ENCODE measurements at regions of chr4 and their contacts with region 1.

Region 1: GRCh38 chr4:145154573-145154972 is 25.8 kb downstream of the OTUD4 start:
- DNase-seq: no peak
- ATAC-seq: peak; percentile 51 to 86 (median 82)
- H3K4me3 ChIP-seq: no peak overlapping the region
- H3K27ac ChIP-seq: peak overlapping the region in 7 of 12 donors; percentile 21 to 77 (median 57)
- H3K4me1 ChIP-seq: peaks cover 0 to 22% (median 5%) of the 10 kb centered on the region in 12 donors
- H3K27me3 ChIP-seq: no peaks in the 10 kb centered on the region
- CTCF ChIP-seq: peak; percentile 23 to 65 (median 54)
- POLR2A ChIP-seq: no peak

Region 2: GRCh38 chr4:144645631-144646522 is 508.7 kb before region 1 on chr4 and contains the start of gene HHIP:
- intact Hi-C with region 1: no loop called
- DNase-seq: peak; percentile 21 to 51 (median 30)
- ATAC-seq: peak in 3 of 4 donors; percentile 68 to 83 (median 73)
- H3K4me3 ChIP-seq: peak within 1 kb of the TSS in 11 of 12 donors; percentile 24 to 61 (median 51)
- H3K27ac ChIP-seq: no peak within 1 kb of the TSS
- H3K4me1 ChIP-seq: peaks cover 0 to 27% (median 8%) of the 10 kb centered on the region in 12 donors
- H3K27me3 ChIP-seq: peaks cover 6 to 58% (median 34%) of the 10 kb centered on the region in 9 donors
- CTCF ChIP-seq: no peak
- POLR2A ChIP-seq: no peak
- total RNA-seq, gene HHIP: 0.04 to 3.8 (median 0.18) TPM in 4 of 9 donors, not detected in the others

Region 3: DNA sequence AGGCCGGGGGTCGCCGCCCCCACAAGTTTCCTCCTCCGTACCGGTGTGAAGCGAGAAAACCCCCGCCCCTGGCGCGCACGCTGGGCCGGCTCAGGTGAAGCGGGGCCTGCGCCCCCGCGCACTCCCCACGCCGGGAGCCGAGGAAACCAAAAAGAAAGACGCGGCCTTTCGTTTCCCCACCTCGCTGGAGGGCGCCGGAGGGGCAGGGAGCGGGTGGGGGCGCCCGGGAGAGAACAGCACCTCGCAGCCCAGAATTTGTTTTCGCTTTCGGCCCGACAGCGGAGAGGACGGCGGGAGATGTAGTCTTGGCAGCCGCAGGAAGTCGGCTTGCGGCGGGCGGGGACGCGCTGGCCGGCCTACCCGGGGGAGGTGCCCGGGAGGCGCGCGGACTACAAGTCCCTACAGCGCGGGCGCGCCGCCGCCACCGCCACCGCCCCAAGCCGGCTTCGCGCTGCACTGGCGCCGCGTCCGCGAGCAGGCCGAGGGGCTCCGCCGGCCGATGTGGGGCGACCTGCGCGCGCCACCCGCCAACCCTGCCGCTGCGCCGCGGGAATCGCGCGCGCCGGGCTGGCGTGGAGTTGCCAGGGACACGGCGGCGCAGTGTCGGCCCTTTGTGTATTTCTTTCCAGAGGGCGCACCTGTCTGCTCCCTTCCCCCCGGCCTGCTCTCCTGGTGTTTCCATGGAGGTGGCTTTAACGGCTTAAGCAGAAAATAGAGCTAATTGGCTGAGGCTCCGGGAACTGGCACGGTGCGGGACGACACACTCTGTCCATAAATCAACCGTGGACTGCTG is 25.9 kb after region 1 on chr4 and contains the start of gene OTUD4:
- intact Hi-C with region 1: loop called in 1 of 10 experiments (anchors 2 kb)
- DNase-seq: peak; percentile 96 to 98 (median 97)
- ATAC-seq: peak; percentile 93 to 97 (median 96)
- H3K4me3 ChIP-seq: peak within 1 kb of the TSS; percentile 51 to 94 (median 82)
- H3K27ac ChIP-seq: peak within 1 kb of the TSS; percentile 90 to 99 (median 96)
- H3K4me1 ChIP-seq: peaks cover 4 to 42% (median 28%) of the 10 kb centered on the region in 12 donors
- H3K27me3 ChIP-seq: no peaks in the 10 kb centered on the region
- CTCF ChIP-seq: peak in 4 of 12 donors; percentile 19 to 37 (median 30)
- POLR2A ChIP-seq: peak in 1 of 2 donors; percentile 48
- total RNA-seq, gene OTUD4: 23.9 to 42.1 (median 31.1) TPM